ENCODE measurements at regions of chr22 and their contacts with region 1.

Region 1: GRCh38 chr22:50141891-50142363 is 28.6 kb upstream of the PANX2 start:
- DNase-seq: peak in 1 of 2 experiments; percentile 58
- H3K4me3 ChIP-seq: no peak overlapping the region
- H3K27ac ChIP-seq: no peak overlapping the region
- H3K4me1 ChIP-seq: no peaks in the 10 kb centered on the region; a peak in 2 of 7 replicates
- H3K27me3 ChIP-seq: 0 out of 7 replicates have a peak, but pooled peaks cover 0 to 1% (median 0%) of the 10 kb centered on the region in 4 experiments
- CTCF ChIP-seq: peak; percentile 36 to 69 (median 56)
- EP300 ChIP-seq: no peak
- POLR2A ChIP-seq: no peak
- RAD21 ChIP-seq: peak; percentile 10 to 34; a peak in 2 of 4 replicates

Region 2: DNA sequence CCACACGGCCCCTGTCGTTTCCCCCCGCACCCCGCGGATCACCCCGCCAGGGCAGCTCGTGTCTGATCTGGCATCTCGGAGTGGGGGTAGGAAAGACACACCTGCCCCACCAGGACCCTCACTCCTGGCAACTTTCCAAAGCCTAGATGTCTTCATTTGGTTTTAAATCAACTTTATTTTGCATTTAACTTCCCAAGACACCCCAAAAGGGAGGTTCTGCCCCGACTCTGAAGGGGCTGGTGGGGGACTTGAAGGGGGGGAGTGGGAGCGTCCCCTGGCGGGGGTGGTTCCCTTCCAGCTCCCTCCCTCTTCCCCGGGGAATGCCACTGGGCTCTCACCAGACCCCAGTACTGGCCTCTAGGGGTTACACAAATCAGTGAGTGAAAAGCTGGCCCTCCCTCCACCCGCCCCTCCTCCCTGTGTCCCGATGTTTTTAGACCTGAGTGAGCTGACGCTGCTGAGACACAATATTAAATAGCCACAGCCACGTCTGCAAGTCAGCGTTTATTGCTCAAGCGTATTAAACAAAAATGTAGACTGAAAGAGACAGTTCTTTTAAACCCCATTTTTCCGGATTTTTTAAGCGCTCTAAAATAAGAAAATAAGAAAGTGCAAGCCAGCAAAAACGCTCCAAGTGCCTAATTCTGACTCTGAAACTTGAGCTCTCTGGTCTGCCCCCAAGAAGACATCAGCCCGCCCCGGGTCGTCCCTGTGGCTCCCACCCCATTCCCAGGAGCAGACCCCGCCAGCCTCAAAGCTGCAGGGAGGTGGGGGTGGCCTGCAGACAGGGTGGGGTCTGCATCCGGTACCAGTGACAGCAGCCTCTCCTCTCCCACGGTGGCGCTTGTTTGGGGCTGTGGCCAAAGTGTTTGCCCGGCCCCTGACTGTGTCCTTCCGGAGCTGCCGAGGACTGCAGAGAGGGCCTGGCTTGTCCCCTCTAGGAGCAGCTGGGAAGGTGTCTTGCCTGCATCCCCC is 82.7 kb before region 1 on chr22:
- CTCF ChIA-PET with region 1: interaction called, 10 read pairs
- POLR2A ChIA-PET with region 1: no interaction called
- DNase-seq: peak in 1 of 2 experiments; percentile 27
- H3K4me3 ChIP-seq: peak overlapping the region; percentile 46 to 66 (median 56)
- H3K27ac ChIP-seq: no peak overlapping the region
- H3K4me1 ChIP-seq: peaks cover 0 to 11% (median 2%) of the 10 kb centered on the region in 4 experiments; a peak in 4 of 7 replicates
- H3K27me3 ChIP-seq: peaks cover 8 to 20% (median 11%) of the 10 kb centered on the region in 4 experiments
- CTCF ChIP-seq: peak; percentile 44 to 49 (median 48)
- EP300 ChIP-seq: no peak
- POLR2A ChIP-seq: no peak
- RAD21 ChIP-seq: peak; percentile 27 to 30; a peak in 3 of 4 replicates

Region 3: DNA sequence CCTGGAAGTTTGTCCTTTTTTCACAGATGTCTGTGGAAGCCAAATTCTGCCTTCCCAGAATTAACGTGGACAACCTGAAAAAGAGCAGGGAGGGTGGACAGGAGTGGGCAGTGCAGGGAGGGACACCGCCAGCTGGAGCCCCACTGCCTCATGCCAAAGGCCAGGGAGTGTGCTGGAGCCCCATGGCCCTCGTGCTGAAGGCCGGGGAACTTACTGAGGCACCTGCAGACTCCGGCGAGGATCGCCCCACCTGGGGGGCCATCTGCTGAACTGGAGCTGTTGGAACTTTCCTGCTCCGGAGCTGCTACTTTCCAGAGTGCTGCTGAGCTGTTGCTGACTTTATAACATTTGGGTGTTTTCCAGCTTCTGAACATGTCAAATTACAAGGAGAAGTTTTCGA is 16.9 kb before region 1 on chr22:
- CTCF ChIA-PET with region 1: interaction called, 11 read pairs
- POLR2A ChIA-PET with region 1: interaction called, 4 read pairs
- DNase-seq: no peak
- H3K4me3 ChIP-seq: no peak overlapping the region
- H3K27ac ChIP-seq: no peak overlapping the region
- H3K4me1 ChIP-seq: no peaks in the 10 kb centered on the region
- H3K27me3 ChIP-seq: peaks cover 0 to 3% (median 1%) of the 10 kb centered on the region in 4 experiments; a peak in 2 of 7 replicates
- CTCF ChIP-seq: no peak
- EP300 ChIP-seq: no peak
- POLR2A ChIP-seq: no peak
- RAD21 ChIP-seq: no peak

Region 4: GRCh38 chr22:50157709-50158375 is 15.9 kb after region 1 on chr22:
- CTCF ChIA-PET with region 1: interaction called, 12 read pairs
- POLR2A ChIA-PET with region 1: no interaction called
- DNase-seq: no peak
- H3K4me3 ChIP-seq: no peak overlapping the region
- H3K27ac ChIP-seq: no peak overlapping the region
- H3K4me1 ChIP-seq: peaks cover 0 to 8% (median 0%) of the 10 kb centered on the region in 4 experiments; a peak in 1 of 7 replicates
- H3K27me3 ChIP-seq: peaks cover 0 to 1% (median 0%) of the 10 kb centered on the region in 4 experiments; a peak in 2 of 7 replicates
- CTCF ChIP-seq: no peak
- EP300 ChIP-seq: no peak
- POLR2A ChIP-seq: no peak
- RAD21 ChIP-seq: no peak

Region 5: GRCh38 chr22:50376085-50376651 is 234.2 kb after region 1 on chr22:
- CTCF ChIA-PET with region 1: no interaction called
- POLR2A ChIA-PET with region 1: no interaction called
- DNase-seq: no peak
- H3K4me3 ChIP-seq: no peak overlapping the region
- H3K27ac ChIP-seq: no peak overlapping the region
- H3K4me1 ChIP-seq: no peaks in the 10 kb centered on the region
- H3K27me3 ChIP-seq: no peaks in the 10 kb centered on the region
- CTCF ChIP-seq: no peak
- EP300 ChIP-seq: no peak
- POLR2A ChIP-seq: no peak
- RAD21 ChIP-seq: no peak

Measured in H1 (cell line).